ENCODE measurements at regions of chr7 and their contacts with region 1.

Region 1: DNA sequence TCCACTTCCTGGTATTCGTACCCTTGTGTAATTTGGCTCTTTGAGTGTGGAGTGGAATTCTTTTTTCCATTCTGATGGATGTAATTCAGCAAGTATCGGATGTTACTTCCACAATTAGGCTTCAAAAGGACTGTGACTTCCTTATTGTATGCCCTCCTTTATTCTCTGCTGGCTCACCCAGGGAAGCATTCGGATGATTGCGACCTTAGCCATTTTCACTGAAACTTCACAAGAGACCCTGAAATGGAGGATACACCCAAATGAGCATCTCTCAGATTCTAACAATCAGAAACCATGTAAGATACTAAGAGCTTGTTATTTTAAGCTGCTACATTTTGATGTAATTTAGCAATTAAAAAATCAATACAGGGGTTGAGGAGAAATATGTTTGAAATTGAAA is 493.1 kb downstream of the DNAJB9 start:
- DNase-seq: no peak
- ATAC-seq: no peak
- H3K4me3 ChIP-seq: no peak overlapping the region
- H3K27ac ChIP-seq: no peak overlapping the region
- H3K4me1 ChIP-seq: no peaks in the 10 kb centered on the region
- H3K27me3 ChIP-seq: no peaks in the 10 kb centered on the region
- CTCF ChIP-seq: no peak
- EP300 ChIP-seq: no peak
- POLR2A ChIP-seq: no peak
- RAD21 ChIP-seq: no peak

Region 2: GRCh38 chr7:108637049-108637621 is 425.7 kb before region 1 on chr7:
- CTCF ChIA-PET with region 1: no interaction called
- POLR2A ChIA-PET with region 1: no interaction called
- RAD21 ChIA-PET with region 1: no interaction called
- SMC1A ChIA-PET with region 1: no interaction called
- in situ Hi-C with region 1: no loop called
- intact Hi-C with region 1: no loop called
- DNase-seq: no peak
- ATAC-seq: no peak
- H3K4me3 ChIP-seq: no peak overlapping the region
- H3K27ac ChIP-seq: no peak overlapping the region
- H3K4me1 ChIP-seq: no peaks in the 10 kb centered on the region
- H3K27me3 ChIP-seq: no peaks in the 10 kb centered on the region
- CTCF ChIP-seq: no peak
- EP300 ChIP-seq: no peak
- POLR2A ChIP-seq: no peak
- RAD21 ChIP-seq: no peak

Region 3: DNA sequence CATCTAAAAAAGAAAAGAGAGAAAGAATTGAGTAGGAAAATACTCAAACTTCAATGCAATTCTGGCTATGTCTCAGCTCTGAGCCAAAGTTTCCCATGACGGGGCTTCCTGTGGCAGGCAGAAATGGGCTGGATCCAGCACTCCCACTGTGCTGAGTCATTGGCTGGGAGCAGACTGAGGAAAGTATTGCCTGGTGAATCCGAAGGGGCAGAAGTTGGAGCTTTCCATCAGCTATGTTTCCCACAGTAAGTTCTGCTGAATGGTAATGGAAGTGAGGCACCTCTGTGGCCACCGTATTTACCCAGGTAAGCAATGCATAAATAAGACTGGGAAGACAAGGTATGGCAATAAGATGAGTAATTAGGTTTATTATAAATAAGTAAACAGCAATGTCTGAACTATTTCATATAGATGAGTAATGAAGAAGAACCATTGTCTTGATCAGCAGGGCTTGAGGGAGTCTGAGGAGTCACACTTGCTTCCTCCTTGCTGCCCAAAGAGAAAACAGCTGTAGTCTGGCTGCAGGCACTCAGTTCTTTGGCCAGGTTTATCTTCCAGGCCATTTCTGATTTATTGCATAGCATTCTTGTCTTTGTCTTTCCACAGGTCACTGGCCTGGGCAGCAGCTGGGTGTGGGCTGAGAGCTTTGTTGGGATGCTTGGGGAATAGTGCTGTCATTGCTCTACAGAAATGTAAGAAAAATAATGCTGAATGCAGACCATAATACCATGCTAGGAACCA is 237.8 kb before region 1 on chr7:
- CTCF ChIA-PET with region 1: no interaction called
- POLR2A ChIA-PET with region 1: no interaction called
- RAD21 ChIA-PET with region 1: no interaction called
- SMC1A ChIA-PET with region 1: no interaction called
- in situ Hi-C with region 1: no loop called
- intact Hi-C with region 1: no loop called
- DNase-seq: no peak
- ATAC-seq: no peak
- H3K4me3 ChIP-seq: no peak overlapping the region
- H3K27ac ChIP-seq: no peak overlapping the region
- H3K4me1 ChIP-seq: no peaks in the 10 kb centered on the region
- H3K27me3 ChIP-seq: no peaks in the 10 kb centered on the region
- CTCF ChIP-seq: no peak
- EP300 ChIP-seq: no peak
- POLR2A ChIP-seq: no peak
- RAD21 ChIP-seq: no peak

Region 4: DNA sequence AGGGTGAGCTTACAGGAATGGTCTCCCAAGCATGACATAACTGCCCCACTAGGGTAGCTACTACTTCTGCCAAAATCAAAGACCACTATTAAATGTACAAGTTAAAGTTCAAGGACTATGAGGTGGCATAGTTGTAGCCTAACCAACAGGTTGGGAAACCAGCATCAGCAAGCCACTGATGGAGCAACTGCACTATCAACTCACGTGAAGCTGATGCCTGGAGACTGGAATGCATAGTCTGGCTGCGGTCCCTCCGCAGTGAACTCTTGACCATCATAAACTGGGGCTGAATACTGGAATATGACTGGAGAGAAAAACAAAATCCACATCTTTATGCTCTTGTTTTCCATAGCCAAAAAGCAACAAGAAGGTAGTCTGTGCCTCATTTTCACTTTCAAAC is 48.3 kb after region 1 on chr7:
- CTCF ChIA-PET with region 1: no interaction called
- POLR2A ChIA-PET with region 1: no interaction called
- RAD21 ChIA-PET with region 1: no interaction called
- SMC1A ChIA-PET with region 1: no interaction called
- in situ Hi-C with region 1: no loop called
- intact Hi-C with region 1: loop called (anchors 10 kb)
- DNase-seq: no peak
- ATAC-seq: no peak
- H3K4me3 ChIP-seq: no peak overlapping the region
- H3K27ac ChIP-seq: no peak overlapping the region
- H3K4me1 ChIP-seq: no peaks in the 10 kb centered on the region
- H3K27me3 ChIP-seq: no peaks in the 10 kb centered on the region
- CTCF ChIP-seq: no peak
- EP300 ChIP-seq: no peak
- POLR2A ChIP-seq: no peak
- RAD21 ChIP-seq: no peak

Measured in GM12878 (cell line).